ENCODE measurements at regions of chr3 and their contacts with region 1.

Region 1: DNA sequence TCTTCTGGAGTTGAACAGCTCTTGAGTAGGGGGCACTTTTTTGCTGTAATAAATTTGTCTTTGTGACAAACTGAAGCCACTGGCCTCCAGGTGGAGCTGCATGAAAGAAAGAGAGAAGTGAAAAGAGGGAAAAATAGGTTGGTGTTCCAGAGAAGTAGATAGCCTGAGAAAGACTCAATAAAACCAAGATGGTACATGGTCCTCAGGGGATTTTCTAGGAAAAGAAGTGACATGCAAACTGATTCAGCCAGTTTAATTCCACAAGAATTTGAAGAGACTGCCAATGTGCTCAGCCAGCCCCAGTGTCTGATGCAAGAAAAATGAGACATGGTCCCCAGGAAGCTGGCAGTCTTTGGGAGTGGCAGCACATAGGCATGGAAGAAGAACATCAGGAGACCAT is 152.7 kb downstream of the CD47 start:
- DNase-seq: no peak
- H3K4me3 Mint-ChIP-seq: no peak overlapping the region
- H3K27ac Mint-ChIP-seq: no peak overlapping the region
- H3K4me1 Mint-ChIP-seq: peaks cover 17% of the 10 kb centered on the region
- H3K27me3 Mint-ChIP-seq: peaks cover 5% of the 10 kb centered on the region

Region 2: DNA sequence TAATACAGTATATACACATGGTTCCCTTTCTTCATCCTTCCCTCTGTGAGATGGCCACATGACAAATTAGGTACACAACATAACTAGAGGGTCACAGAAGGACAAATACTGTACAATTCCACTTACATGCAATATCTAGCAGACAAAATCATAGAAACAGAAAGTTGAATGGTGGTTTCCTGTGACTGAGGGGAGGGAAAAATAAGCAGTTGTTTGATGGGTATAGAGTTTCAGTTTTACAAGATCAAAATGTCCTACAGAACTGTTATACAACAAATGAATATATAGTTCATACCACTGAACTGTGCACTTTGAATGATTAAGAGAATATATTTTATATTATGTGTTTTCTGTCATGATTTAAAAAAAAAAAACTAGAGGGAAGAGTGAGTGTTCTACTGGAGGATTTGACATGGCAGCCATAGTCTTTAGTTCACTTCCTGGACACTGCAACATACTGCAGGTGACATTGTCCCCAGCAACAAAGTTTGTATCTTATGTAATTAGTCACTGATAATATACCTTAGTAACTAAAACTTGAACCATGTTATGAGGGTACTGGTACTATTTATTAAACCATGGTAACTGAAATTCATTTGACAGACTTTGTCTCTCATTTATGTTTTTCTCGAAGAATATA is 523.7 kb before region 1 on chr3:
- intact Hi-C with region 1: loop called (anchors 5 kb)
- DNase-seq: no peak
- H3K4me3 Mint-ChIP-seq: no peak overlapping the region
- H3K27ac Mint-ChIP-seq: no peak overlapping the region
- H3K4me1 Mint-ChIP-seq: peaks cover 11% of the 10 kb centered on the region
- H3K27me3 Mint-ChIP-seq: peaks cover 7% of the 10 kb centered on the region

Region 3: DNA sequence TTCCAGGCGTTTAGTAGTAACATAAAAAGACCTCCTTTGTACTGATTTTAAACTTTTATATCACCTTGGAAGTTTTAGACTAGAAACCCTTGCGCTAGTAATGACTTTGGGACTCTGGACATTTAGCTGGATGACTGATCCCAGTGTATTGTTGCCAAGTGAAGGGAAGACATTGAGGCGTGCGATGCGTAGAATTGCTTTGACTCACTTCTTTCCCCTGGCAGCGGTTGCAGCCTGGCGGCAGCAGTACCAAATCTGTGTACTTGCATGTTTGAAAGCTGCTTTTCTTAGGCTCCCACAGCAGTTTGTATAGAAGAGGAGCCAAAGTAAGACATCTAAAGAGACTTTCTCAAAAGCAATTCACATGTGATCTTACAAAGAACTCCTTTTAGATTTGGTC is 263.8 kb before region 1 on chr3:
- intact Hi-C with region 1: no loop called
- DNase-seq: no peak
- H3K4me3 Mint-ChIP-seq: no peak overlapping the region
- H3K27ac Mint-ChIP-seq: no peak overlapping the region
- H3K4me1 Mint-ChIP-seq: peaks cover 23% of the 10 kb centered on the region
- H3K27me3 Mint-ChIP-seq: no peaks in the 10 kb centered on the region

Region 4: DNA sequence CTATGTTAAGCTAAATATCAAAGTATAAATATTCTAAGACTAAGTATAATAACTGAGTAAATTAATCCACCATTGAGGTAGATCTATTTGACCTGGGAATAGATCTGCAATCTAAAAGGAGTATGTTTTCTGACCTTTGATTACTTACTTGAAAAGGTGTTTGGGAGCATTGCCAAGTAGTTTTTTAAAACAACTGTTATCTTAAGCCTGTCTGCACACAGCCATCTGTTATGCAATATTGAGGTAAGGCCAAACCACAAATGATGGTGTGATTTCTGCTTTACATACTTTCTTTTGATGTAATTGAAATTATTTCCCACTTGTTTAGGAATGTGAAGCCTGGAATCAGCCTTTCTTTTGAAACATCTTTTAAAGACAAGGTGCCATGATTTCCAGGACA is 141.4 kb before region 1 on chr3:
- intact Hi-C with region 1: no loop called
- DNase-seq: no peak
- H3K4me3 Mint-ChIP-seq: no peak overlapping the region
- H3K27ac Mint-ChIP-seq: no peak overlapping the region
- H3K4me1 Mint-ChIP-seq: no peaks in the 10 kb centered on the region
- H3K27me3 Mint-ChIP-seq: no peaks in the 10 kb centered on the region

Region 5: GRCh38 chr3:107927361-107928083 is 10.6 kb before region 1 on chr3:
- intact Hi-C with region 1: loop called (anchors 1 kb)
- DNase-seq: peak; percentile 50
- H3K4me3 Mint-ChIP-seq: peak overlapping the region; percentile 85
- H3K27ac Mint-ChIP-seq: no peak overlapping the region
- H3K4me1 Mint-ChIP-seq: peaks cover 9% of the 10 kb centered on the region
- H3K27me3 Mint-ChIP-seq: peaks cover 18% of the 10 kb centered on the region

Region 6: DNA sequence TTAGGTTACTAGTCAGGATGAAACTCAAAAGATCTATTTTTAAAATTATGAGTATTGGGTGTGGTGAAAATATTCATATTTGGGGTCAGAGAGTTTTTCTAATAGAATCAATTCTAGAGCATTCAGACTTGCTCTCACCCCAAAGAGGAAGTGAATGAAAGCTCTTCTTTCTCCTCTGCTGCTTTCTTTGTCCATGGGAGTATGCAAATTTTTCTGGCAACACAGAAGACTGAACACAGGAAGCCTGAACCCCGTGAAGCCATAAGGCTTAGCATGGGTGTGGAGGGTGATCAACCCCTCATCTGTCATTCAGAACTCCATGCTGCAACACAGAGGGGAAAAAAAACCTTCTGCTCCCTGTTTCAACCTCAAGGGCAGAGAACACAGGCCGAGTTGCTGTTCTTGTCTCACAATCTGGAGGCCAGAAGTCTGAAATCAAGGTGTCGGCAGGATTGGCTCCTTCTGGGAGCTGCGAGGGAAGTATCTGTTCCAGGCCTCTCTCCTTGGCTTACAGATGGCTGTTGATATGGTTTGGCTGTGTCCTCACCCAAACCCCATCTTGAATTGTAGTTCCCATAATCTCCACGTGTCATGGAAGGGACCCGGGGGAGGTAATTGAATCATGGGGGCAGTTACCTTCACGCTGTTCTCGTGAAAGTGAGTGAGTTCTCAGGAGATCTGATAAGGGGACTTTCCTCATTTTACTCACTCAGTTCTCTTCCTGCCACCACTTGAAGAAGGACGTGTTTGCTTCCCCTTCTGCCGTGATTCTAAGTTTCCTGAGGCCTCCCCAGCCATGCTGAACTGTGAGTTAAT is 186.4 kb after region 1 on chr3:
- intact Hi-C with region 1: loop called (anchors 1 kb)
- DNase-seq: peak; percentile 67
- H3K4me3 Mint-ChIP-seq: peak overlapping the region; percentile 89
- H3K27ac Mint-ChIP-seq: peak overlapping the region; percentile 96
- H3K4me1 Mint-ChIP-seq: peaks cover 59% of the 10 kb centered on the region
- H3K27me3 Mint-ChIP-seq: peaks cover 2% of the 10 kb centered on the region

Region 7: DNA sequence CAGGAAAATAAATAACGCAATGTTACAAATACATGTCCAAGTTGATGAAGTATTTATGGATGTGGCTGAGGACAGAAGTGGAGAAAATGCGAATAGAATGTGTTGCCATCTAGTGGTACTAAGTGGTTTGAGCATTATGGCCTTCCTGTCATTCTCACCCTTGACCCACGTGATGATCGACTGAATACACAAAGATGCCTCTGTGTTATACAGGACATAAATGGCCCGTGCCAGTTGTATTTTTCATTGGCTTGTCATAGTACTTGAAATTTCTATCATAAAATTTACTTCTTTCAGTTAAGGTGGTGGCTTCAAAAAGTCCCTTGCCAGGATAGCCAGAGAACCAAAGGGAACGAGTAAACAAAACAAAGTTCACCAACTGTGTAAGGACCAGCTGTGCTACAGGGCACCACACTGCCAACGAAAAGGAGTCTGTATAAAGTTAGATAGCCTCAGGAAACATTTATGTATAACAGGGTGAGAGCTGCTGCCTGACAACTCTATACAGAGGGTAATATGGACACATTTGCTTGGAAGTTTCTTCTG is 468.6 kb after region 1 on chr3:
- intact Hi-C with region 1: loop called (anchors 10 kb)
- DNase-seq: peak; percentile 9
- H3K4me3 Mint-ChIP-seq: no peak overlapping the region
- H3K27ac Mint-ChIP-seq: no peak overlapping the region
- H3K4me1 Mint-ChIP-seq: peaks cover 11% of the 10 kb centered on the region
- H3K27me3 Mint-ChIP-seq: no peaks in the 10 kb centered on the region